Activated CD4-positive, alpha-beta T cell treated with anti-CD3 and anti-CD28 coated beads, Interleukin-2, amount 10 ng/mL, durations not matched to agents 24 days and 14 days (primary cell): ENCODE measurements at regions of chrX and their contacts with region 1.

Region 1: DNA sequence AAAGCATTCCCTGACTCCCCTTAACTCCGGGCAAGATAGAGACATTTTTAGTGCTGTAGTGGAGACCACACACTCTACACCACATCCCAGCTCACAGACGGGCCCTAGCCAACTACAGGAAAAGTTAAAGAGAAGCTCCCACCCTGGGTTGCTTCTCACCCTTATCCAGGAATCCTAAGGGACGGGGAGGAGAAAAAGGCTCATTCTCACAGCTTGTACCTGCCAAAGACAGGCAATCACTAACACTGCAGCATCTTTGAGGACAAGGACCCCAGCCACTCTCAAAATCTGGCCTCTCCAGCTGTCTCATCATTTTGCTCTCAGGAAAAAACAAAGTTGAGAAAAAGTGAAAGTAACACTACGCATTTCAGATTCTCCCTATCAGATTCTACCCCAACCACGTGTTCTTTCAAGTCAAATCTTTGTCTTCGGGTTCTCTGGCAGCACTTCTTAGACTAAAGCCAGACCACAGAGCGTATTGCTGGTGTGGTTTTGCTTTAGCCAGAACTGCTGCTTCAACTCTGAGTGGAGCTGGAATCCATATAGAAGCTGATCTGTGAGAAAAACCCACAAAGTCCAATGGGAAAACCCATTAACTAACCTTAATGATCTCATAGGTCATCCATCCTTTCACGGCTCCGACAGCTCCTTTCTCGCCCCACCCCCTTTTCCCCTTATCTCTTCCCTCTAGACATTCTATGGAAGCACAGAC is 605.9 kb upstream of the DIPK2B start:
- DNase-seq: peak; percentile 87
- H3K4me3 Mint-ChIP-seq: peak overlapping the region; percentile 80
- H3K27ac Mint-ChIP-seq: peak overlapping the region; percentile 88
- H3K4me1 Mint-ChIP-seq: peaks cover 72% of the 10 kb centered on the region
- H3K27me3 Mint-ChIP-seq: no peaks in the 10 kb centered on the region

Region 2: DNA sequence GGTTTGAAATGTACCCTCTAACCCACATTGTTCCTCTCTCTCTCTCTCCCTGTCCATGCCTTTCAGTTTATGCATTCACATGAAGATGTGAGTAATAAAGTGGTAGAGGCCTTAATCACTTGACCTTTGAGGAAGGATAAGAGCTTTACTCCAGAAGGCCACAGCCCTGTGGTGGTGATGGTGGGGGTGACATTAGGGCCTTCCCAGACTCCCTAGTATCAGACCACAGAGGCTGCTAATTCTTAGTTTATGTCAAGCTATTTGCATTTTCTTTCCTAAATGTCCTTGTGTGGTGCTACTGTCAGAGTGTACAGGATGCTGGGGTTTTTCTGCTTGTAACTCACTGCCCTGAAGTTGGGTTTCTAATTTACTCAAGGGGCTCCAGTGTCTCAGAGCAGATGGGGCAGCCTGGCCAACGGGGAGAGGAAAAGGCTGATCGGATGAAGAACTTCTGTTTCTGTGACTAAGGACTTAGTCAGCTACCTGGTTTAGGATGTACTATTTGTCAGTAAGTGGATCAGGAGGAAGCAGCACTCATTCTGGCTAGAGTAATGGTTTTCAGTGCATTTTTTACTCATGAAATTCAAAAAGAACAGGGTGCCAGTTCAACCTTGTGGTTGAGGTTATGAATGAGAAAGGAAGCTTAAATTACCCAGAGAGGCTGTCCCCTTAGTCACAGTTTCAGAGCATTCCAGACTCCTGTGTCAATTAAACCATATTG is 96.3 kb before region 1 on chrX:
- intact Hi-C with region 1: loop called (anchors 1 kb)
- DNase-seq: peak; percentile 71
- H3K4me3 Mint-ChIP-seq: peak overlapping the region; percentile 49
- H3K27ac Mint-ChIP-seq: peak overlapping the region; percentile 81
- H3K4me1 Mint-ChIP-seq: peaks cover 46% of the 10 kb centered on the region
- H3K27me3 Mint-ChIP-seq: no peaks in the 10 kb centered on the region

Region 3: DNA sequence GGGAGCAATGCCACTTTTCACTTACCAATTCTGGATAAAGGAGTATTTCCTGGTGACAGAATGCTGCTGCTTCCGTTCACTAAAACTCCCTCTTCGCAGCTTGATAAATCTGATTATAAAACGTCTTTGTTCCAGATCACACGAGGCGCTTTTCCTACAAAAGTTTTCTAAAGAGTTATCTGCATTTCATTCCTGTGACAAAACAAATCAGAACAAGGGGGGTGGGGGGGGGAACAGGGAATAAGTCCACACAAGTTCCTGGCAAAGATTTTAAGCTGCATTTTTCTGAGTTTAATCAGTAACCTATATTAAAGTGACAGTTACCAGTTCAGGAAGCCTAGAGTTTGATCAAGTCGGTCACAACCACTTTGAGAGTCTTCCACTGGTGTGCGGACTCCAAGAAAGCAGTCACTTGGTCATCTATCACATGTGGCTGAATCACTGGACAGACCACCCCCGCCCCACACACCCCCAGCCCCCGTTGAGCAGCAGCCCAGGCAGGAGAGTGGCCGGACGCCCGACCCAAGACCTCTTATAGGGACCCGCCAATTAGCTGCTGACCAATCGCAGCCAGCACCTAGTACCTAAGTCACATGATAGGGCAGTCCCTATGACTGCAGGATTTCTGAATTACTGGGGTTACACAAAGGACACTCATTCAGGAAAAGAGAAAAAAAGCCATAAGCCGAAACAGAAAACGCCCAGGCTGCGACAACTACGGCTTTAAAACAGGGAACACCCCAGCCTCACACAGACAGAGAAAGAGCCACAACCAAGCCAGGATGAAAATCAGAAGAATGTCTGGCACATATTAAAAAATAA is 36.6 kb before region 1 on chrX:
- intact Hi-C with region 1: loop called (anchors 1 kb)
- DNase-seq: peak; percentile 77
- H3K4me3 Mint-ChIP-seq: peak overlapping the region; percentile 84
- H3K27ac Mint-ChIP-seq: peak overlapping the region; percentile 95
- H3K4me1 Mint-ChIP-seq: peaks cover 40% of the 10 kb centered on the region
- H3K27me3 Mint-ChIP-seq: no peaks in the 10 kb centered on the region

Region 4: GRCh38 chrX:45818913-45819312 is 12.3 kb after region 1 on chrX:
- intact Hi-C with region 1: loop called (anchors 1 kb)
- DNase-seq: no peak
- H3K4me3 Mint-ChIP-seq: peak overlapping the region; percentile 37
- H3K27ac Mint-ChIP-seq: peak overlapping the region; percentile 91
- H3K4me1 Mint-ChIP-seq: peaks cover 23% of the 10 kb centered on the region
- H3K27me3 Mint-ChIP-seq: no peaks in the 10 kb centered on the region

Region 5: GRCh38 chrX:45843518-45843917 is 37.0 kb after region 1 on chrX:
- intact Hi-C with region 1: loop called (anchors 2 kb)
- DNase-seq: peak; percentile 62
- H3K4me3 Mint-ChIP-seq: peak overlapping the region; percentile 80
- H3K27ac Mint-ChIP-seq: peak overlapping the region; percentile 87
- H3K4me1 Mint-ChIP-seq: peaks cover 39% of the 10 kb centered on the region
- H3K27me3 Mint-ChIP-seq: no peaks in the 10 kb centered on the region

Region 6: DNA sequence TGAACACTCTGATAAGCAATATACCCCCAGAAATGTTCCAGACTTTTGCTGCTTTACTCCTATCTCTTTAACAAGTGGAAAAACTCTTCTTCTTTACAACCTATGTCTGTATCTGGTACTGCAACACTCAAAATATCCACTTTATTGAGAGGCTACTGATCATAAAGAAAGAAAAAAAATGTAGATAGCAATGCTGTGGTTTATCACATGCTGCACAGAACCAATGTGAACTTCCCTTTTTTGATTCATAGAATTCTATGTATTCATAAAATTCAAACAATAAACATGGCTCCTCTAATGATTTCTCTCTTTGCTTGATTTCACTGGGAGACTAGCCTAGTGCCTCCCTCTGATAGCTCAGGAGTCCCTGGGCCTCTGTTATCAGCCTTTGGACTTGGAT is 515.1 kb after region 1 on chrX:
- intact Hi-C with region 1: loop called (anchors 2 kb)
- DNase-seq: no peak
- H3K4me3 Mint-ChIP-seq: no peak overlapping the region
- H3K27ac Mint-ChIP-seq: peak overlapping the region; percentile 62
- H3K4me1 Mint-ChIP-seq: peaks cover 48% of the 10 kb centered on the region
- H3K27me3 Mint-ChIP-seq: no peaks in the 10 kb centered on the region